Caco-2 (cell line): ENCODE measurements at regions of chr2 and their contacts with region 1.

Region 1: DNA sequence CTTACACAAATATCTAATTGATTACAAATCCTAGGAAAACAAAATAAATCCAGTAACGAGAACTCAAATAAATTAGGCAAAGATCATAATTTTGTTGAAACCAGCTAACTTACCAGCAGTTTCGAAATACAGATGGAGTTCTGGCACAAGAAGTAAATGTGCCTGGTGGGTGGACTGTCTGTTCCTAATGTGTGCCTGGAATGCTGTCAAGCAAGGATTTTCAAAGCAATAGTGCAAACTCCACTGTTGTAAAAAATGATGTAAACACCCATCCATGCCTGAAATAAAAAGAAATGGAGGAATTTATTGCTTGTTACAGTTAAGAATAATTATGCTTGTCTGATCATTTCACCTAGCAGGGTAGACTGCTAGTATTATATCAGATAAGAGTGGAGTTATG is 423.9 kb upstream of the MAP2 start:
- DNase-seq: peak; percentile 65 to 75
- H3K4me3 ChIP-seq: no peak overlapping the region
- H3K4me3 Mint-ChIP-seq: peak overlapping the region; percentile 53
- H3K27ac Mint-ChIP-seq: peak overlapping the region; percentile 75
- H3K4me1 ChIP-seq: peaks cover 22% of the 10 kb centered on the region
- H3K4me1 Mint-ChIP-seq: peaks cover 17% of the 10 kb centered on the region
- H3K27me3 ChIP-seq: no peaks in the 10 kb centered on the region
- H3K27me3 Mint-ChIP-seq: no peaks in the 10 kb centered on the region
- CTCF ChIP-seq: no peak

Region 2: DNA sequence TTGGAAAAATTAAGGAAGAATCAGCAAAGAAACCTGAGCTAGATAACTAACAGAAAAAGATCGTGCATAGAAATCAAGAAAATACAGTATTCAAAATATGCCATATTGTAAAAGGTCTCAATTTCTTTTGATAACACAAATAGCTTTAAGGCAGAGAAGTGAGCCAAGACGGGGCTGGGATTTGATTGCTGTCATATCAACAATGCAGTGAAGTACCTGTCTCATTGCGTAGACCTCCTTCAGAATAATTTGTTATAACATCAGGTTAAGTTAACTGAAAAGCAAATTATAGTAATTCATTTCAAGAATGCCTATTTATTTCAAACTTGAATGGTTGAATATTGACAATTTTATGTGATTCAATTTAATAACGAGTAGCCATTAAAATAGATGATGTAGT is 29.8 kb before region 1 on chr2:
- CTCF ChIA-PET with region 1: no interaction called
- POLR2A ChIA-PET with region 1: no interaction called
- intact Hi-C with region 1: no loop called
- DNase-seq: no peak
- H3K4me3 ChIP-seq: no peak overlapping the region
- H3K4me3 Mint-ChIP-seq: no peak overlapping the region
- H3K27ac Mint-ChIP-seq: no peak overlapping the region
- H3K4me1 ChIP-seq: no peaks in the 10 kb centered on the region
- H3K4me1 Mint-ChIP-seq: no peaks in the 10 kb centered on the region
- H3K27me3 ChIP-seq: no peaks in the 10 kb centered on the region
- H3K27me3 Mint-ChIP-seq: peaks cover 6% of the 10 kb centered on the region
- CTCF ChIP-seq: no peak

Region 3: DNA sequence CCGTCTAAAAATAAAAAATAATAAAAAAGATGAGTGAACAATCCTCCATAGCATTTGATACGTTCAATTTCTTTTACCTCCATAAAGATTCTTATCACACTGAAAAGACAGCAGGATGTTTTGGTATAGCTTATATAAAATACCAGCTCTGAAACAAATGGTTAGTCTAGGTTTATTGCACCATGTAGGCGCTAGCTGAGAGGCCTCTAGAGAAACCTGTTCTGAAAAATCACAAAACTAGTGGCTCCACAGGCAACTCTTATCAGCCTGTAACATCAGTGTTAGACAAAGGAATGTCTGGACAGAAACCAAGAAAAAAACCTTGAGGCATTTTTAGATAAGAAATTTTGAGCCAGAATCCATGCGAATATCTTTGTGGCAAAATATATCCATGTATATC is 16.5 kb before region 1 on chr2:
- CTCF ChIA-PET with region 1: no interaction called
- POLR2A ChIA-PET with region 1: no interaction called
- intact Hi-C with region 1: loop called (anchors 1 kb)
- DNase-seq: peak; percentile 57 to 65
- H3K4me3 ChIP-seq: no peak overlapping the region
- H3K4me3 Mint-ChIP-seq: peak overlapping the region; percentile 15
- H3K27ac Mint-ChIP-seq: peak overlapping the region; percentile 24
- H3K4me1 ChIP-seq: peaks cover 30% of the 10 kb centered on the region
- H3K4me1 Mint-ChIP-seq: no peaks in the 10 kb centered on the region
- H3K27me3 ChIP-seq: no peaks in the 10 kb centered on the region
- H3K27me3 Mint-ChIP-seq: no peaks in the 10 kb centered on the region
- CTCF ChIP-seq: no peak

Region 4: DNA sequence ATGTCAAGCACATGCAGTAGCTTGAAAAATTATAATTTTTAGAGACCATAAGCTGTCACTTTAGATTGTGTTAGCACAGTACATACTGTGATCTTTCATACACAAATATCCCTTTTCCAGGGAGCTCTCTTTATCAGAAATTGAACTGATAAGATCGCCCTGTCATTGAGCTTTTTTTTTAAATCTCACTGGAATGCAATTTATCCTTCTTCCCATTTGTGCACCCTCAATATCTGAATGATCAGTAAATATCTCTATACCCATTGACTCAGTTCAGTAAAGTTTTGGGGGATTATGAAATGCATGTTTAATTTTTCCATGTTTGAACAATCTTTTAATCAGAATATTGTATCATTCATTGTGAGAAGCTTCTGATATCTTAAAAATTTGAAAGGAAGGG is 16.3 kb after region 1 on chr2:
- CTCF ChIA-PET with region 1: no interaction called
- POLR2A ChIA-PET with region 1: no interaction called
- intact Hi-C with region 1: no loop called
- DNase-seq: no peak
- H3K4me3 ChIP-seq: no peak overlapping the region
- H3K4me3 Mint-ChIP-seq: no peak overlapping the region
- H3K27ac Mint-ChIP-seq: no peak overlapping the region
- H3K4me1 ChIP-seq: no peaks in the 10 kb centered on the region
- H3K4me1 Mint-ChIP-seq: no peaks in the 10 kb centered on the region
- H3K27me3 ChIP-seq: no peaks in the 10 kb centered on the region
- H3K27me3 Mint-ChIP-seq: no peaks in the 10 kb centered on the region
- CTCF ChIP-seq: no peak